Dendritic cell treated with granulocyte-macrophage colony-stimulating factor and Interleukin-4, amounts not matched to agents 40 ng/mL and 50 ng/mL, for 4 days (primary cell): ENCODE measurements at regions of chr6 and their contacts with region 1.

Region 1: GRCh38 chr6:87756858-87757257 is 54.8 kb upstream of the AKIRIN2 start:
- H3K4me3 Mint-ChIP-seq: no peak overlapping the region
- H3K27ac Mint-ChIP-seq: peak overlapping the region; percentile 82
- H3K4me1 Mint-ChIP-seq: peaks cover 51% of the 10 kb centered on the region
- H3K27me3 Mint-ChIP-seq: no peaks in the 10 kb centered on the region

Region 2: DNA sequence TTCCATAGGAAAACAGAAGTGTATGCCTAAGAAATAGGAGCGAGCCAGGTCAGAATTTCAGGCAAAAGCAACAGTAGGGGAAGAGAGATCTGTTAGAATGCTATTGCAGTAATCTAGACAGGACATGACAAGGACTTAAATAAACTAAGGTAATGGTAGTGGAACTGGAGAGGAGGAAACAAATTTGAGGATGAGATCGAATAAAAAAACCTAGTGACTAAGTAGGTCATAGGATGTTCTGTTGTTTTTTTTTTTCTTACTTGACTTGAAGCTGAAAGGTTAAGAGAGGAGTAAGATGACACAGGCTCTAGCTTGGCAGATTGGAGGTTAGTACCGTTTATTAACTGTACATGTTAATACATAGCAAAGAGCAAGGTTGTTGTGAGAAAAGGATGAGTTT is 138.3 kb before region 1 on chr6:
- intact Hi-C with region 1: no loop called
- H3K4me3 Mint-ChIP-seq: no peak overlapping the region
- H3K27ac Mint-ChIP-seq: no peak overlapping the region
- H3K4me1 Mint-ChIP-seq: no peaks in the 10 kb centered on the region
- H3K27me3 Mint-ChIP-seq: no peaks in the 10 kb centered on the region

Region 3: GRCh38 chr6:87723170-87724078 is 33.4 kb before region 1 on chr6:
- intact Hi-C with region 1: loop called (anchors 5 kb)
- H3K4me3 Mint-ChIP-seq: no peak overlapping the region
- H3K27ac Mint-ChIP-seq: peak overlapping the region; percentile 83
- H3K4me1 Mint-ChIP-seq: peaks cover 54% of the 10 kb centered on the region
- H3K27me3 Mint-ChIP-seq: no peaks in the 10 kb centered on the region

Region 4: DNA sequence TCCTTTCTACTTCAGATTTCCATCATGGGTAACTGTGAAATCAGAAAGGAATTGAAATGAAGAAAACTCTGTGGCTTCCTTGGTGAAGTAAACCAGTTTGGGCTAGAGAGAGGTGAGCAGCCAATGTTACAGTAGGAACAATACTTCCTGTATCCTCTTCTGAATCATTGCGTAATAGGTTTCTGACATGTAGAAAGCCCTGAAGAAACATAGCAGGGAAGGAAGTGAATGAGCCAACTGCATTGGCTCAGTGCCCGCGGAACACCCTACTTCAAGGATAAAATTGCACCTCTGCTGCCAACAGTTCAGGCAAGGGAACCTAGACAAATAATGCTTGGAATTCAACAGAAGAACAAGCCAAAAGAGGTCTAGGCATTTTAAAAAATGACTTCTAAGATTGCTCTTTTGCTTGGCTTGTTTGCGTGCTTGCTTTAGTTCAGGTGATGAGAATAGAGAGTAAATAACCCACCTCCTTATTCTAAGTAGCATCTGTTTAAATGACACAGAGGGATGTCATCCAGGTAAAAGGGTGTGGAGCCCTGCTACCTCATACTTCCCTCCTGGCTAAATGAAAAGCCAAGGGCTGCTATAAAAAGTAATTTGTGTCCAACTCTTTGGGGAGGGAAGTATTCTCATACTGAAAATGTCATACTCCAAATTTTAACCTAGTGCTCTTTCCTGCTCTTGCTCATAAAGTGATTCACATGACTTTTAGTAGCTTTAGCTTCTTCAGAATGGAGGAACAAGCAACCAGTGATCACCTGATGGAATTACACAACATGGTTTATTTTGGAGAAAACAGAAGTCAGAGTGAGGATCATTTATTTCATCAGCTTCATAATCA is 24.8 kb before region 1 on chr6:
- intact Hi-C with region 1: loop called (anchors 1 kb)
- H3K4me3 Mint-ChIP-seq: no peak overlapping the region
- H3K27ac Mint-ChIP-seq: peak overlapping the region; percentile 76
- H3K4me1 Mint-ChIP-seq: peaks cover 47% of the 10 kb centered on the region
- H3K27me3 Mint-ChIP-seq: no peaks in the 10 kb centered on the region